ENCODE measurements at regions of chr5 and their contacts with region 1.

Region 1: GRCh38 chr5:44332285-44332971 is 56.8 kb downstream of the FGF10 start:
- DNase-seq: no peak
- ATAC-seq: no peak
- H3K4me3 Mint-ChIP-seq: no peak overlapping the region
- H3K27ac Mint-ChIP-seq: no peak overlapping the region
- H3K4me1 Mint-ChIP-seq: no peaks in the 10 kb centered on the region
- H3K27me3 Mint-ChIP-seq: no peaks in the 10 kb centered on the region
- CTCF ChIP-seq: no peak

Region 2: GRCh38 chr5:43729846-43730478 is 602.5 kb before region 1 on chr5:
- CTCF ChIA-PET with region 1: no interaction called
- POLR2A ChIA-PET with region 1: no interaction called
- intact Hi-C with region 1: loop called (anchors 2 kb)
- DNase-seq: no peak
- ATAC-seq: no peak
- H3K4me3 Mint-ChIP-seq: no peak overlapping the region
- H3K27ac Mint-ChIP-seq: no peak overlapping the region
- H3K4me1 Mint-ChIP-seq: no peaks in the 10 kb centered on the region
- H3K27me3 Mint-ChIP-seq: peaks cover 10% of the 10 kb centered on the region
- CTCF ChIP-seq: no peak

Region 3: DNA sequence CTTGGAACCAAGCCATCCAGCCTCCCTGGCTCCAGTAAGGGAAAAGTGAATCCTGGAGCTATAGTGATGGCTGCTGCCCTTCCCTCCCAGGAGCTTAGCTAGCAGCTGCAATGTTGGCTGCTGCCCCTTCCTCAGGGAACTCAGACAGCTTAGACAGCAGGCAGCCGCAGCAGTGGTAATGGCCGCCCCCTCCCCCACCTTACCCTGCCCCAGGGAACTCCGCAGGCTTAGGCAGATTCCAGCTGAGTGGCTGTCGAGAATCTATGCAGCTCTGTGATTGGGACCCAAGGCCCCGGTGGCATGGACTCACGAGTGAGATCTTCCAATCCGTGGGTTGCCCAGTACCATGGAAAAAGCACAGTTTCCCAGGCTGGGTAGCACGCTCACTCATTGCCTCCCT is 350.9 kb before region 1 on chr5:
- CTCF ChIA-PET with region 1: no interaction called
- POLR2A ChIA-PET with region 1: no interaction called
- intact Hi-C with region 1: no loop called
- DNase-seq: no peak
- ATAC-seq: no peak
- H3K4me3 Mint-ChIP-seq: no peak overlapping the region
- H3K27ac Mint-ChIP-seq: no peak overlapping the region
- H3K4me1 Mint-ChIP-seq: no peaks in the 10 kb centered on the region
- H3K27me3 Mint-ChIP-seq: no peaks in the 10 kb centered on the region
- CTCF ChIP-seq: no peak

Region 4: GRCh38 chr5:44454002-44454401 is 121.6 kb after region 1 on chr5:
- CTCF ChIA-PET with region 1: no interaction called
- POLR2A ChIA-PET with region 1: no interaction called
- intact Hi-C with region 1: no loop called
- DNase-seq: no peak
- ATAC-seq: no peak
- H3K4me3 Mint-ChIP-seq: no peak overlapping the region
- H3K27ac Mint-ChIP-seq: no peak overlapping the region
- H3K4me1 Mint-ChIP-seq: no peaks in the 10 kb centered on the region
- H3K27me3 Mint-ChIP-seq: no peaks in the 10 kb centered on the region
- CTCF ChIP-seq: no peak

Measured in activated B cell treated with CpG ODN at 0.5 μM for 24 hours (primary cell).